ENCODE measurements at regions of chr3 and their contacts with region 1.

Region 1: DNA sequence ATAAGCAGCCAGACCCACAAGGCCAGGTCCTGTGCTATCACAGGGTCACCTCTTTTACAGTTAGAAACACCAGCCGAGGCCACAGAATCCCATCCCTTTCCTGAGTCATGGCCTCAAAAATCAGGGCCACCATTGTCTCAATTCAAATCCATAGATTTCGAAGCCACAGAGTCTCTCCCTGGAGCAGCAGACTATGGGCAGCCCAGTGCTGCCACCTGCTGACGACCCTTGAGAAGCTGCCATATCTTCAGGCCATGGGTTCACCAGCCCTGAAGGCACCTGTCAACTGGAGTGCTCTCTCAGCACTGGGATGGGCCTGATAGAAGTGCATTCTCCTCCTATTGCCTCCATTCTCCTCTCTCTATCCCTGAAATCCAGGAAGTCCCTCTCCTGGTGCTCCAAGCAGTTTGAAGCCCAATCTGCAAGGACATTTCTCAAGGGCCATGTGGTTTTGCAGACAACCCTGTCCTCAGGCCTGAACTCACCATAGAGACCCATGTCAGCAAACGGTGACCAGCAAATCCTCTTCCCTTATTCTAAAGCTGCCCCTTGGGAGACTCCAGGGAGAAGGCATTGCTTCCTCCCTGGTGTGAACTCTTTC is 39.6 kb downstream of the TGM4 start:
- DNase-seq: peak; percentile 22 to 77 (median 66)
- ATAC-seq: peak; percentile 72
- H3K4me3 ChIP-seq: no peak overlapping the region
- H3K4me3 Mint-ChIP-seq: no peak overlapping the region
- H3K27ac ChIP-seq: no peak overlapping the region
- H3K27ac Mint-ChIP-seq: no peak overlapping the region
- H3K4me1 ChIP-seq: no peaks in the 10 kb centered on the region
- H3K4me1 Mint-ChIP-seq: no peaks in the 10 kb centered on the region
- H3K27me3 ChIP-seq: no peaks in the 10 kb centered on the region
- H3K27me3 Mint-ChIP-seq: peaks cover 10% of the 10 kb centered on the region
- CTCF ChIP-seq: peak; percentile 73

Region 2: DNA sequence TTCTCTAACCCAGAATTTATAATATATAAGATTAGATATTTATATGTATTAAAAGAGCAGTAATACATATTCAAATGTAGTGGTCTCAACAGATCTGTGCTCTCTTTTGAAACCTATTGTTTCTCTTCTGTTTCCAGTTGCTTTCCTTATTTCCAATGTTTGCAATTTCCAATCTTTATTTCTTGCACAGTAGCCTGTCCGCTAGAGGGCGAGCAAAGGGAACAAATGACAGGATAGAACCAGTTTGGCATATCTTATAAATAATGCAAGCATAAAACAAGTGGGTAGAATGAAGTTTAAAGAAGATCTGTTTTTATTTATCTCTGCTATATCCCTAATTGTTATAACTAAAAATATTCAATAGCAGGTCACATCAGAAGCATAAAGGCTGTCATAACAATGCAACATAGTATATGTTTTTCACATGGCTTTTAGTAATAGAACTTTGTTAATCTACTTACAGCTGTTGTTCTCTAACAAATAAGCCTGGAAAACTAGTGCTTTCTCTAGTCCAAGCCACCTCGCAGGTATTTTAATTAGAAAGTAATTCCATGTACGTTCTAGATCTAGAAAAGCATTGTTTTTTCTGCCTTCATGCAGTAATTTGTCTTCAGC is 590.5 kb before region 1 on chr3:
- CTCF ChIA-PET with region 1: interaction called, 4 read pairs
- POLR2A ChIA-PET with region 1: no interaction called
- intact Hi-C with region 1: loop called in 1 of 2 experiments (anchors 2 kb)
- DNase-seq: peak; percentile 6 to 68 (median 58)
- ATAC-seq: no peak
- H3K4me3 ChIP-seq: no peak overlapping the region
- H3K4me3 Mint-ChIP-seq: no peak overlapping the region
- H3K27ac ChIP-seq: no peak overlapping the region
- H3K27ac Mint-ChIP-seq: no peak overlapping the region
- H3K4me1 ChIP-seq: no peaks in the 10 kb centered on the region
- H3K4me1 Mint-ChIP-seq: no peaks in the 10 kb centered on the region
- H3K27me3 ChIP-seq: peaks cover 0 to 3% of the 10 kb centered on the region in 2 experiments
- H3K27me3 Mint-ChIP-seq: peaks cover 9% of the 10 kb centered on the region
- CTCF ChIP-seq: peak; percentile 86

Region 3: GRCh38 chr3:44535364-44535763 is 378.6 kb before region 1 on chr3:
- CTCF ChIA-PET with region 1: interaction called, 94 read pairs
- POLR2A ChIA-PET with region 1: no interaction called
- intact Hi-C with region 1: loop called in 1 of 2 experiments (anchors 1 kb)
- DNase-seq: no peak
- ATAC-seq: no peak
- H3K4me3 ChIP-seq: no peak overlapping the region
- H3K4me3 Mint-ChIP-seq: no peak overlapping the region
- H3K27ac ChIP-seq: no peak overlapping the region
- H3K27ac Mint-ChIP-seq: no peak overlapping the region
- H3K4me1 ChIP-seq: no peaks in the 10 kb centered on the region
- H3K4me1 Mint-ChIP-seq: no peaks in the 10 kb centered on the region
- H3K27me3 ChIP-seq: peaks cover 3 to 4% of the 10 kb centered on the region in 2 experiments
- H3K27me3 Mint-ChIP-seq: peaks cover 41% of the 10 kb centered on the region
- CTCF ChIP-seq: no peak

Region 4: GRCh38 chr3:44795197-44795596 is 118.8 kb before region 1 on chr3:
- CTCF ChIA-PET with region 1: no interaction called
- POLR2A ChIA-PET with region 1: no interaction called
- intact Hi-C with region 1: no loop called
- DNase-seq: no peak
- ATAC-seq: no peak
- H3K4me3 ChIP-seq: no peak overlapping the region
- H3K4me3 Mint-ChIP-seq: no peak overlapping the region
- H3K27ac ChIP-seq: no peak overlapping the region
- H3K27ac Mint-ChIP-seq: no peak overlapping the region
- H3K4me1 ChIP-seq: no peaks in the 10 kb centered on the region
- H3K4me1 Mint-ChIP-seq: no peaks in the 10 kb centered on the region
- H3K27me3 ChIP-seq: no peaks in the 10 kb centered on the region
- H3K27me3 Mint-ChIP-seq: no peaks in the 10 kb centered on the region
- CTCF ChIP-seq: no peak

Region 5: DNA sequence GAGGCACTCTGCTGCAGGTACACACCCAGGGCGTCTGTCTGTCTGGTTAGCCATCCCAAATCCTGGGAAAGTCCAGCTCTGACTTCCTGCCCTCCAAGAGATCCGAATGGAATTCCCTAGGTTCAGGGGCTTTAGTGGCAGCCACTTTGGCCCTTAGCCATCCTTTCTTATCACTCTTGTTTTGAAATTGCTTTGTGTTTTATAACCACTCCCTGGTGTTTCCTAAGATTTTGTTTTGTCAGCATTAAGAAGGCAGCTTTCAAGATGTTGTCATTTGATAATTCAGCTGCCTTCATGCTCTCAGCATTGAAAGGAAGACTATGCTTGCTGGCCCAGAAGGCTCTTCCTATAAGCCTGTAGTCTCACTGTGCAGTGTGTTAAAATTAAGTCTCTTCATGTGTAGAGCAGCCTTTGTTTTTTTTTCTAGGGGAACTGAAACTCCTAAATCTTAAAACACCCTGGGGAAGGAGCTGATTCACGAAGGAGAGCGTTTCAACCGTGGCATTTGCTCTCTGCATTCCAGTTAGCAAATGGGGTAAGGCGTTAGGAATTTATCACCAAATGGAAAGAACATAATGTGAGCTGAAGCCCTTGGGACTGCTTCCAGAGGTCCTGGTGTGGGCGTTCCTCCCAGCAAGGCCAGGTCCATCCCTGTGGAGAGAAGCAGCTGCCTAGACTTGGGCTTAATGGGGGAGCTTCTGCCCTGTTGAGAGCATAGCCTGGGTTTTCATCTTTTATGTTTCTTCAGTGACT is 98.0 kb after region 1 on chr3:
- CTCF ChIA-PET with region 1: no interaction called
- POLR2A ChIA-PET with region 1: no interaction called
- intact Hi-C with region 1: no loop called
- DNase-seq: no peak
- ATAC-seq: no peak
- H3K4me3 ChIP-seq: no peak overlapping the region
- H3K4me3 Mint-ChIP-seq: no peak overlapping the region
- H3K27ac ChIP-seq: no peak overlapping the region
- H3K27ac Mint-ChIP-seq: no peak overlapping the region
- H3K4me1 ChIP-seq: peaks cover 2% of the 10 kb centered on the region
- H3K4me1 Mint-ChIP-seq: peaks cover 7% of the 10 kb centered on the region
- H3K27me3 ChIP-seq: no peaks in the 10 kb centered on the region
- H3K27me3 Mint-ChIP-seq: no peaks in the 10 kb centered on the region
- CTCF ChIP-seq: no peak